ENCODE measurements at regions of chr3 and their contacts with region 1.

Region 1: DNA sequence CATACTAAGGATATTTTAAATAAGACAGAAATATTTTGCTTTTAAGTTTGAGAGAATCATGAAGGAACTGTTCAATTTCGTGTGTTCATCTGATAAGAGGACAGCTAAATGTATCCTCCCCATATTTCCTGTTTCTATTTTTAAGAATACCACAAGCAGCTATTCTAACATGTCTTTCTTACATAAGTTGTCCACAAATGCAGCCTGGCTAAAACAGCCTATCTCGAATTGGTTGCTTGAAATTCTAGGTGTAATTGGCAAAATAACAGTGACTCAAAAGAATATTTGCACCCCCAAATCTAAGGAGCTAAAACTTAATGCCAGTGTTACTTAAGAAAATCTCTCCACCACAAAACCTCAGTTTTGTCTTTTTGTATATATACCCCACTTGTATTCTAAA is 35.0 kb downstream of the BTLA start:
- DNase-seq: no peak
- H3K4me3 Mint-ChIP-seq: peak overlapping the region; percentile 31
- H3K27ac Mint-ChIP-seq: peak overlapping the region; percentile 59
- H3K4me1 Mint-ChIP-seq: peaks cover 85% of the 10 kb centered on the region
- H3K27me3 Mint-ChIP-seq: peaks cover 1% of the 10 kb centered on the region

Region 2: DNA sequence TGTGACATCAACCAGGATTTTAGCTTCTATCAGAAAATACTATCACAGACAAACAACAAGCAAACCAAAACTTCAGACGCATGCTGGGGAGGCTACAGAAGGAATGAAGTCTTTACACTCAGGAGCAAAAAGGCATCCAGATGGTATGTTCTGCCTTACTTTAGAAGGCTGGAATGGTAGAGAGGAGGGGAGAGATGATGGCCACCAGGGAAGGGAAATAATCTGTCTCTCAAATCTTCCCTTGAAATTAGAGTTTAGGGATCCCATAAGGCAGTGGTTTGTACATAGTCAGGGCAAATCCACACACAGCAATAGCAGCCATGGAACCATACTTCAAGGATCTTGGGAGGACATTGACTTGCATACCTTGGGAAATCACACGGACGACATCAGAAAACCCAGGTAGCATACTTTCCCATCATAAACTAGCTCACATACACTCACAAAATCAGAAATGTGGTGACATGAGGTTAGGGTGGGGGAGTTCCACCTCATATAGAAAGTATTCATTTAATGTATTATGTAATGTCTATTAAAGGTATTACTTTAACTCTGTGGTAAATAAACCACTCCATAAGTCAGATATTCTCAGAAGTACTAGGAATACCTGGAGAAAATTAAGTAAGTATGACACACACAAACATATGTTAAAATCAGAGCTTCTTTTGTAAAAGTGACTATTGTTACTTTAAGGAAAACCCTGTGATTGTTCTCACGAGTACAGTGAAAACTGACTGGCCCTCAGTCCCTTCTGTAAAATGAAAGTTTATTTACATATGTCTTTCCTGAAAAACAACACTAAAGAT is 25.6 kb after region 1 on chr3:
- intact Hi-C with region 1: loop called (anchors 1 kb)
- DNase-seq: no peak
- H3K4me3 Mint-ChIP-seq: peak overlapping the region; percentile 72
- H3K27ac Mint-ChIP-seq: peak overlapping the region; percentile 91
- H3K4me1 Mint-ChIP-seq: peaks cover 64% of the 10 kb centered on the region
- H3K27me3 Mint-ChIP-seq: no peaks in the 10 kb centered on the region

Region 3: DNA sequence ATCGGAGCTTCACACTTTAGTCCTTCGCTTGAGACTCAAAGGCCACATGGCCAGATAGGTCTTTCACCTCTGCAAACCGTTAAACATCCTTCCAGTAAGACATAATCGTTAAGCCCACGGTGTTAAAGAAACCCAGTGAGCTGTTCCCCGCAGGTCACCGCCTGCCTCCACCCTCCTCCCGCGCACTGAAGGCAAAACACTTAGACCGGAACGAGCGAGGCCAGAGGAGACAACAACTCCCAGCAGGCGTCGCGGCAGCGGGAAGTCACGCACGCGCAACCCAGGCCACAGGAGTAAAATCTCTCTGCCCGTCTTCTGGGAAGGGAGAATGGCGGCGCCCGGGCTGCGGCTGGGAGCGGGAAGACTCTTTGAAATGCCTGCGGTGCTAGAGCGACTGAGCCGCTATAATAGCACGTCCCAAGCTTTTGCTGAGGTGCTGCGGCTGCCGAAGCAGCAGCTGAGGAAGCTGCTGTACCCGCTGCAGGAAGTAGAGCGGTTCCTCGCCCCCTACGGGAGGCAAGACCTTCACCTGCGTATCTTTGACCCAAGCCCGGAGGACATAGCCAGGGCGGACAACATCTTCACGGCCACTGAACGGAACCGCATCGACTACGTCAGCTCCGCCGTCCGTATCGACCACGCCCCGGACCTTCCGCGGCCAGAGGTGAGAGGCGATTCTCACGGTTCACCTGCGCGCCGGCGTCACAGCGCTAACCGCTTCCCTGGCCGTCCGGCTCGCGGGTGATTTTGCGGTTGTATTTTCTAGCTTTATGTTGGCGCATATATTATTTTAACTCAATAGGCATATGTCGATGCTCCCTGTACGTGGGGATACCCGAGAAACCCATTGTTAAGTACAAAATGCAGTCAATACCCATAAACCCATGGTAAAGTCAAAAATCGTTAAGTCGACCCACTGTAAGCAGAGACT is 526.7 kb after region 1 on chr3 and contains the start of gene GTPBP8:
- intact Hi-C with region 1: no loop called
- DNase-seq: peak; percentile 81
- H3K4me3 Mint-ChIP-seq: peak within 1 kb of the TSS; percentile 90
- H3K27ac Mint-ChIP-seq: peak within 1 kb of the TSS; percentile 93
- H3K4me1 Mint-ChIP-seq: peaks cover 79% of the 10 kb centered on the region
- H3K27me3 Mint-ChIP-seq: no peaks in the 10 kb centered on the region
- total RNA-seq, gene GTPBP8: 22.6 and 25.0 TPM in 2 replicates